ENCODE measurements at regions of chr10 and their contacts with region 1.

Region 1: DNA sequence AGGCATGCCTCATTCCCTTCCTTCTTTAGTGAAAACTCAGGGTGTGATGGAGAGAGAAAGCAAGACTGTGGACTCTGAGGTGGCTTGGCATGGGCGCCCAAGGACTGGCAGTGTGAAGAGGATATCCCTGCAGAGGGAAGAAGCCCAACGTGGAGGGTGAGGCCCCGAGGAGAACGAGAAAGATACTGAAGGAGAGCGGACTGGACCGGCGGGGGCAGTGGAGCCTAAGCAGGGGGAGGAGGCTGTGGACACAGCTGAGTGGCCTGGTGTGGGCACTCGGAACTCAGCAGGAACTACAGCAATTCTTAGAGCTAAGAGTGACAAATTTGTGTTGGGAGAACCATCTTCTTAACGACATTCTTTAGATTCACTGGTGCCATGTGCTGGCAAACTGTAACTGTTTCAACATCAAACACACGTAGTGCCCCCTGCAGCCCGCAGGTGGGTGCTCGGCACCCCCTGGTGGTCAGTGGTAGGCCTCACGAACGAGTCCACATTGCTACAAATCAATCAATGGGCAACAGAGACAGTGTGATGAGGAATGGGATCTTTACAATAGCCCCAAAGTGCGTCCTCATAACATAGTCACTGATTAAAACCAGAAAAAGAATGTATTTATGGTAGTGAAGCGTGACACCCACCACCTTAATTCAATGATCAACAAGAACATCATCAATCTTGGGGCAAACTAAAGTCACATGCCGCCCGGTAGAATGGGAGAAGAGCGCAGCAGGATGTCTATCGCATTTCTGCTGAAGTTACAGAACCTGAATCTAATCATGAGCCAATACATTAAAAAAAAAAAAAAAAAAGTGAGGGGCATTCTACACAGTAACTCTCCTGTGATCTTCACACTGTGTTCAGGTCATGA is 2.0 kb upstream of the SFTPA1 start:
- DNase-seq: peak; percentile 68
- ATAC-seq: peak; percentile 73
- H3K4me3 Mint-ChIP-seq: no peak overlapping the region
- H3K27ac Mint-ChIP-seq: no peak overlapping the region
- H3K4me1 Mint-ChIP-seq: no peaks in the 10 kb centered on the region
- H3K27me3 Mint-ChIP-seq: no peaks in the 10 kb centered on the region
- CTCF ChIP-seq: peak; percentile 76

Region 2: GRCh38 chr10:79542626-79543025 is 66.1 kb before region 1 on chr10:
- CTCF ChIA-PET with region 1: interaction called, 7 read pairs
- POLR2A ChIA-PET with region 1: no interaction called
- intact Hi-C with region 1: loop called (anchors 10 kb)
- DNase-seq: no peak
- ATAC-seq: no peak
- H3K4me3 Mint-ChIP-seq: no peak overlapping the region
- H3K27ac Mint-ChIP-seq: no peak overlapping the region
- H3K4me1 Mint-ChIP-seq: peaks cover 2% of the 10 kb centered on the region
- H3K27me3 Mint-ChIP-seq: no peaks in the 10 kb centered on the region
- CTCF ChIP-seq: no peak

Region 3: GRCh38 chr10:79562135-79562756 is 46.5 kb before region 1 on chr10:
- CTCF ChIA-PET with region 1: no interaction called
- POLR2A ChIA-PET with region 1: no interaction called
- intact Hi-C with region 1: loop called (anchors 10 kb)
- DNase-seq: peak; percentile 78
- ATAC-seq: peak; percentile 86
- H3K4me3 Mint-ChIP-seq: no peak overlapping the region
- H3K27ac Mint-ChIP-seq: no peak overlapping the region
- H3K4me1 Mint-ChIP-seq: no peaks in the 10 kb centered on the region
- H3K27me3 Mint-ChIP-seq: peaks cover 15% of the 10 kb centered on the region
- CTCF ChIP-seq: peak; percentile 71

Region 4: DNA sequence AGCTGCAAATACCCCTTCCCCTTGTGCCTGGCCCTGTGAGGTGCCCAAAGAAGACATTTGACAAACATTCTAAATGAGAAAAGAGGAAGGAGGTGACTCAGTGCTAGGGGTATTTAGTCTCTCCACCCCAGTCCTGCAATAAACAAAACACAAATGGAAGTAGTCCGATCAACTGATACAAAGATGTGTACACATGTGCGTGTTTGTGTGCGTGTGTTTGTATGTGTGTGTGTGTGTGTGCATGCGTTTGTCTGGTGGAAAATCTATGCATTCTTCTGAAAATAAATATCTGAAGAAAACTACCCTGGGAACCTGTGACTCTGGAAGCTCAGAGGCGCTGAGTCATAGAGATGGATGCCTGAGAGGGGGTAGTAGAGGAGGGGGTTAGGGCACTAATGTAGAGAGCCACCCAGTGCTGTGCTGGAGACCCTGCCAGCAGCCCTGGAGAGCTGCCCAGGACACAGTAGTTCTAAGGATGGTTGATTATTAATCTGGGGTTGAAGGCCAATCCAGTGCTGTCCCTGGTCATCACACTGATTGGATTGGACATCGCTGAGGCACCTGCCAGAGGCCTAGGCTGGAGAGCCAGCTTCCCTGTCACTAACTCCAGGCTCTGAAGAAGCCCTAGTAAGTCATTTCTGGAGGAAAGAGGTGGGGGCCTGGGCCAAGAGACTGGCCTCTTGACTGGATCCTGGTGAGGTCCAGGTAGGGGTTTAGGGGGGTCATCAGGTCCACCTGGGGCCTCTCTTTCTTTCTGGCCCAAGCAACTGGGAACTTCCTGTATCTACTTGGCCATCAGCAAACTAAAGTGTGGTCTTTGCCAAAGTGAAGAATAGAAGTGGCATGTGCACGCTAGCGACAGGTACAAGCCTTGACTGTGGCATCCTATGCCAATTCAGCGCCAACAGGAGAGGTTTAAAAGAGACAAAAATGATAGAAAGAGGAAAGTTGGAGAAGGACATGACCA is 20.5 kb after region 1 on chr10:
- CTCF ChIA-PET with region 1: no interaction called
- POLR2A ChIA-PET with region 1: no interaction called
- intact Hi-C with region 1: no loop called
- DNase-seq: no peak
- ATAC-seq: no peak
- H3K4me3 Mint-ChIP-seq: no peak overlapping the region
- H3K27ac Mint-ChIP-seq: no peak overlapping the region
- H3K4me1 Mint-ChIP-seq: no peaks in the 10 kb centered on the region
- H3K27me3 Mint-ChIP-seq: peaks cover 6% of the 10 kb centered on the region
- CTCF ChIP-seq: no peak